ENCODE measurements at regions of chr22 and their contacts with region 1.

Region 1: GRCh38 chr22:21001560-21002325 is at the start of gene THAP7:
- H3K4me3 ChIP-seq: peak within 1 kb of the TSS; percentile 83
- H3K27ac ChIP-seq: peak within 1 kb of the TSS; percentile 65
- H3K4me1 ChIP-seq: no peaks in the 10 kb centered on the region
- CTCF ChIP-seq: 0 out of 2 replicates have a peak, but pooled peaks have one; percentile 34

Region 2: GRCh38 chr22:20819471-20819870 is 182.3 kb before region 1 on chr22:
- CTCF ChIA-PET with region 1: no interaction called
- POLR2A ChIA-PET with region 1: no interaction called
- H3K4me3 ChIP-seq: no peak overlapping the region
- H3K27ac ChIP-seq: no peak overlapping the region
- H3K4me1 ChIP-seq: no peaks in the 10 kb centered on the region
- CTCF ChIP-seq: no peak

Region 3: GRCh38 chr22:20940186-20940651 is 61.5 kb before region 1 on chr22:
- CTCF ChIA-PET with region 1: no interaction called
- POLR2A ChIA-PET with region 1: no interaction called
- H3K4me3 ChIP-seq: no peak overlapping the region
- H3K27ac ChIP-seq: no peak overlapping the region
- H3K4me1 ChIP-seq: no peaks in the 10 kb centered on the region; the same call in 1 of the 2 replicates
- CTCF ChIP-seq: no peak

Region 4: DNA sequence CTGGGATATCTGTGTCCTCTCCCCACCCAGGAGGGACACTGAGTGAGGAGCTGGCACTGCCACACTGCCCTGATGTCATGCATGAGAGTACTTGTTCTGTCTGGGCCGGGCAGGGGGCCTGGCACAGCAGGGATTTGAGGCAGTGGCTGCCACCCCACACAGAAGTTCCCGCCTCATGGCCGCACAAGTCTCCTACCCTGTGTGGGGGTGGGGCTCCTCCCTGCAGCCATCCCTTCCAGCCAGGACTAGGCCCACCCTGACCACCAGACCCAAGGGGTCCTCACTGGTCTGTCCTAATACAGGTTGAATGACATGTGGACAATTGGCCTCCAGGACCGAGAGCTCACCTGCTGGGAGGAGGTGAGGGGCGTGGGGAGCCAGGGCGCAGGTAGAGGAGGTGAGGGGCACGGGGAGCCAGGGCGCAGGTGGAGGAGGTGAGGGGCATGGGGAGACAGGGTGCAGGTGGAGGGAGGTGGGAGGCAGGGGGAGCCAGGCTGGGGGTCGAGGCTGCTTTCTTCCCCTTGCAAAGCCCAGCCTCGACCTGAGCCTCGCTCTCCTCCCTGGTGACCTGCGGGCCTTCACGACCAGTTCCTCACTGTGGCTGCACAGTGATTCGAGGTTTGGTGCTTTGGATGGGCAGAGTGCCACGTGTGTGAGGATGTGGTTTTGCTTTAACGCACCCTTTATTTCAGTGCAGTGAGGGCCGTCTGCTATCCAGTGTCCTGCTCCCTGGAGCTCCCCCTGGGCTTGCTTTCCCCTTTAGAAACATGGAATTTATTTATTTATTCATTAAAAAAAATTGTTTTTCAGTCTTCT is 12.2 kb before region 1 on chr22:
- CTCF ChIA-PET with region 1: interaction called, 4 read pairs
- POLR2A ChIA-PET with region 1: interaction called, 20 read pairs
- H3K4me3 ChIP-seq: no peak overlapping the region
- H3K27ac ChIP-seq: no peak overlapping the region
- H3K4me1 ChIP-seq: no peaks in the 10 kb centered on the region
- CTCF ChIP-seq: no peak

Measured in HEK293 (cell line).